Activated CD4-positive, alpha-beta T cell treated with anti-CD3 and anti-CD28 coated beads for 36 hours (primary cell): ENCODE measurements at regions of chr1 and their contacts with region 1.

Region 1: GRCh38 chr1:13908128-13908527 is 208.1 kb downstream of the PRDM2 start:
- DNase-seq: no peak
- ATAC-seq: no peak
- H3K4me3 Mint-ChIP-seq: no peak overlapping the region
- H3K27ac Mint-ChIP-seq: no peak overlapping the region
- H3K4me1 Mint-ChIP-seq: no peaks in the 10 kb centered on the region
- H3K27me3 Mint-ChIP-seq: peaks cover 3% of the 10 kb centered on the region

Region 2: GRCh38 chr1:13929313-13929712 is 21.2 kb after region 1 on chr1:
- CTCF ChIA-PET with region 1: no interaction called
- POLR2A ChIA-PET with region 1: no interaction called
- intact Hi-C with region 1: loop called in 1 of 2 experiments (anchors 2 kb)
- DNase-seq: no peak
- ATAC-seq: no peak
- H3K4me3 Mint-ChIP-seq: no peak overlapping the region
- H3K27ac Mint-ChIP-seq: no peak overlapping the region
- H3K4me1 Mint-ChIP-seq: no peaks in the 10 kb centered on the region
- H3K27me3 Mint-ChIP-seq: peaks cover 19% of the 10 kb centered on the region